PC-3 (cell line): ENCODE measurements at regions of chr5 and their contacts with region 1.

Region 1: DNA sequence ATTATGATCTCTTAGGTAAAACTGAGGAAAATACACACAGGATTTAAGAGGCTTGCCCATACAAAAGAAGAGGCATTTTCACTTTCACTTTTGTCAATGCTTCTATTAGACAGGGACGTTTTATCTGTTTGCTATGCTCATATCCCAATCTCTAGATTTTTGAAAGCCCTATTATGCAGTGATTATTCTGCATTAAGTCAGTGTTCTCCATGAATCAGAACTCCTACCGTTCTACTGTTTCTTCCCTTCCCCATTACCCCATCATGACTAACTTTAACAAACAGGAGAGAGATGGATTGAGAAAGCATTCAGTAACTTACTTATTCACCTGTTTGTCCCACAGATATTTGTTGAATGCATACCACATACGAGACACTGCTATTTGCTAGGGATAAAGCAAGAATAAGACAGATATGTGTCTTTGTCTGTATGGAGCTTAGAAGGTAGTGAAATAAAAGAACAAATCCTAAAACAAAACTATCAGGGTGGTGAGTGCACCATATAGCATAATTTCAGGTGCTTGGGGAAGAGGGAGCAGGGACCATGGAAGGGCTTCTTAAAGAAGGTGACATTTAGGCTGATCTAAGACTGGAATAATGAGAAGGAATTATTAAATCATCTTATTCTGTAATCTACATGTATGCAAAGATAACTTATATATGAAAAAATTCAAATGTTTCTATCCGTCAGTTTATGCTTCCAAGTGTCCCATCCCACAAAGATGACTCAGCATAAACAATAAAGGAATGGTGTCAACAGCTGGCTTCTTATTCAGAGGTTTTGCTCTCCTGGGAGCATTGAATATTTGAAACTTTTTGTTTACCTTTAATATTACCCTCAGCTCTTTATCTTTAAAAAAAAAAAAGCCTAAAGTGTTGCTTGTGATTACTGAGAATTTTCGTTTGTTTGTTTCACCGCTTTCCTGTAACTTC is 328.1 kb downstream of the HINT1 start:
- DNase-seq: peak; percentile 54
- ATAC-seq: peak; percentile 94
- H3K4me3 ChIP-seq: peak overlapping the region; percentile 55
- H3K27ac ChIP-seq: peak overlapping the region; percentile 13
- H3K4me1 ChIP-seq: peaks cover 16% of the 10 kb centered on the region; the same call in 1 of the 2 replicates
- H3K27me3 ChIP-seq: no peaks in the 10 kb centered on the region
- CTCF ChIP-seq: no peak

Region 2: GRCh38 chr5:130796902-130797301 is 40.1 kb before region 1 on chr5:
- CTCF ChIA-PET with region 1: no interaction called
- POLR2A ChIA-PET with region 1: no interaction called
- intact Hi-C with region 1: loop called (anchors 2 kb)
- DNase-seq: no peak
- ATAC-seq: no peak
- H3K4me3 ChIP-seq: no peak overlapping the region
- H3K27ac ChIP-seq: peak overlapping the region; percentile 48
- H3K4me1 ChIP-seq: peaks cover 17% of the 10 kb centered on the region
- H3K27me3 ChIP-seq: no peaks in the 10 kb centered on the region
- CTCF ChIP-seq: no peak

Region 3: DNA sequence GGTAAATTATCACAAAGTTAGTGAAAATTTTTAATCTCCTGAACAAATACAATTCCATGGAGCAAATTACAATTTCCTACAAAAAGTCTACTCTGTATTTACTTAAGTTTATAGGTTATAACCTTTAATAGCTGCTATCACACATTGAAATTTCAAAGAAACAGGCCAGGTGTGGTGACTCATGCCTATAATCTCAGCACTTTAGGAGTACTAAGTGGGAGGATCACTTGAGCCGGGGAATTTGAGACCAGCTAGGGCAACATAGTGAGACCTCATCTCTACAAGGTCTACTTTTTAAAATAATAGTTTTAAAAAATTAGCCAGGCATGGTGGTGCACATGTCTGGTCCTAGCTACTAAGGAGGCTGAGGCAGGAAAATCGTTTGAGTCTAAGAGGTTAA is 277.8 kb after region 1 on chr5:
- CTCF ChIA-PET with region 1: no interaction called
- POLR2A ChIA-PET with region 1: no interaction called
- intact Hi-C with region 1: no loop called
- DNase-seq: peak; percentile 31
- ATAC-seq: peak; percentile 55; the same call in 1 of the 2 replicates
- H3K4me3 ChIP-seq: no peak overlapping the region
- H3K27ac ChIP-seq: no peak overlapping the region
- H3K4me1 ChIP-seq: no peaks in the 10 kb centered on the region
- H3K27me3 ChIP-seq: no peaks in the 10 kb centered on the region
- CTCF ChIP-seq: no peak